ENCODE measurements at regions of chr7 and their contacts with region 1.

Region 1: DNA sequence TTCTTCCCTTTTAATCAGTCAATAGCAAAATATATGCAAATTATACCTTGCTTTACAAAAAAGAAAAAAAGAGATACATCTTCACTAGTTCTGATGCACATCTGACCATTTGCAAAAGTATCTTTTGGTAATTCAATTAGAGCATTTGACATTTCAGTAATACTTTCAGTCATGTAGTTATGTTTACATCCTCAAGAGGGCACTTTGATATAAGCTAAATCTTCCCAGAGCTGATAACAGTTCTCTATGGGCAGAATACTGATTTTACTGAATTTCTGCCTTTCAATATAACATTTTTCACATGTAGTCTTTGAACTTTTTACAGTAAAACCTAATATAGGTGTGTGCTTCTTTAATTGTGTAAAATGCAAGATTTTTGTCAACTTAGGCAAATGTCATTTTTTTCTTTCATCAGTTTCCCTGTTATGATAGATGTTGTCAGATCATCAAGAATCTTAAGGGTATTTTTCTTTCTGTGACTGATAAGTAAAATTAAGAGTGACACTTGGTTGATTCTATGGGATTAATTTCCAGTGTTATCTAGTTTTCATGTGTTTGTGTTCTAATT is 703.5 kb upstream of the SEMA3D start:
- DNase-seq: no peak
- H3K4me3 ChIP-seq: no peak overlapping the region
- H3K27ac ChIP-seq: no peak overlapping the region
- H3K27me3 ChIP-seq: no peaks in the 10 kb centered on the region
- CTCF ChIP-seq: peak; percentile 61

Region 2: DNA sequence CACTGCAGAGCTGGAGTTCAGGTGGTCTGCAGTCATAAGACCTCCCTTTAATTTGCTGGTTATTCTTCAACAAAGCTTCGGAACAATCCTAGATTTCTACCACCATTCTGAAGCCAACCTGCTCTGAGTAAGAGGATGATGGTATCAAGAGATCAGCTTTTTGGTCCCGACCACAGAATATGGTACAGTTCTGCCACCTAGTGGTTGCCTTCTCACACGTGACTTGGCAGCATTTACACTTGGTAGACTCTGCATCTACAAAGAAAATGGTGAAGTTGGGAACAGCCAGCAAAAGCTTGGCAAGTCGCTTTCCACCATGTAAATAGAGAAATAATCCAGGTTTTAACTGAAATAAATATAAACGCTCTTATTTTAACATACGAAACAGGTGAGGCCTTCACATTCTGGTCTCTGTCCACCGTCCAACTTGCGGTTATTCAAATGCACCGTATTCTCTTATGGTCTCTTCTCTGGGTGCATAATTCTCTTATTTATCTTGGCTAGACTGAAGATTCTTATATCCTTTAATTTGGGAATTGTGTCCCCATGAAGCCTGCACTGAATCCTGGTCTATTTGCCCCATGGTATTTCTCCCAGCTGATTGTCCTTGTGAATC is 579.5 kb after region 1 on chr7:
- CTCF ChIA-PET with region 1: interaction called, 10 read pairs
- POLR2A ChIA-PET with region 1: no interaction called
- DNase-seq: no peak
- H3K4me3 ChIP-seq: no peak overlapping the region
- H3K27ac ChIP-seq: no peak overlapping the region
- H3K27me3 ChIP-seq: no peaks in the 10 kb centered on the region
- CTCF ChIP-seq: peak; percentile 48

Region 3: DNA sequence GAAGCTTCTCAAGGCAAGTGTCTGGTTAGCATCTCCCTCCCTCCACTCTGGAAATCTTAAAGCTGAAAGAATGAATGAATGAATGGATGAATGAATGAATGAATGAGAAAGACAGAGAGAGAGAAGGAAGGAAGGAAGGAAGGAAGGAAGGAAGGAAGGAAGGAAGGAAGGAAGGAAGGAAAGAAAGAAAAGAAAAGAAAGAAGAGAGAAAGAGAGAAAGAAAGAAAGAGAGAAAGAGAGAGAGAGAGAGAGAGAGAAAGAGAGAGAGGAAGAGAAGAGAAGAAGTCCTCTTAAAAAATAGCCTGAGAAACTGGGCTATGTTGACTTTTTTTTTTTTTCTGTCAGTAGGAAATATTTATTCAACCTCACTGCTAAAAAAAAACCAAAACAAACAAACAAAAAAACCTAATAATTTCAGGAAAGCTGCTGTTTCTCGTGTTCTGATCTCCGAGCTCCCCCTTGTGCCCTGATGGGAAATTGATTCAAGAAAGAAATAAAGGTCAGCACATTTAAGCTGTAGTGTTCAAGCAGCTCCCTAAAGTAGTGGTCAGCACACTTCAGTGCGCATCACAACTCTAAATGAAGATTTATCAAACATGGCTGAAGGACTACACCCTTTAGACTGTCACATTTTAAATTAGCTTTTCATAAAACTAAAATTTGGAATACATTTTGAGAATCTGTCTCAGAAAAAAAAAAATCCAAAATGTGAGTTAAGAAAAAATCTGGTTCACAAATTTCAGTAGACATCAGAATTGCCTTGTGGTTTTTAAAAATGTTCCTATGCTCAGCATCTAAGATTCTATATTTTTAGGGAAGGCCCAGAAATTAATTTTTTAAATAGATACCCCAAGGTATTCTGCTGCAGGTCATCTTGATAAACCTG is 1014.9 kb after region 1 on chr7:
- CTCF ChIA-PET with region 1: interaction called, 21 read pairs
- POLR2A ChIA-PET with region 1: no interaction called
- DNase-seq: no peak
- H3K4me3 ChIP-seq: no peak overlapping the region
- H3K27ac ChIP-seq: no peak overlapping the region
- H3K27me3 ChIP-seq: no peaks in the 10 kb centered on the region
- CTCF ChIP-seq: peak; percentile 68

Region 4: GRCh38 chr7:87038993-87039716 is 1148.8 kb after region 1 on chr7:
- CTCF ChIA-PET with region 1: no interaction called
- POLR2A ChIA-PET with region 1: no interaction called
- DNase-seq: no peak
- H3K4me3 ChIP-seq: peak overlapping the region; percentile 18
- H3K27ac ChIP-seq: no peak overlapping the region
- H3K27me3 ChIP-seq: no peaks in the 10 kb centered on the region
- CTCF ChIP-seq: no peak

Measured in AG04450 (cell line).